OCI-LY7 (cell line): ENCODE measurements at regions of chr6 and their contacts with region 1.

Region 1: GRCh38 chr6:13277836-13278563 is 50.3 kb downstream of the TBC1D7 start:
- DNase-seq: peak; percentile 70
- H3K4me3 ChIP-seq: no peak overlapping the region
- H3K27ac ChIP-seq: no peak overlapping the region
- H3K4me1 ChIP-seq: peaks cover 42% of the 10 kb centered on the region
- CTCF ChIP-seq: peak; percentile 86

Region 2: GRCh38 chr6:11744753-11745152 is 1533.2 kb before region 1 on chr6:
- CTCF ChIA-PET with region 1: no interaction called
- POLR2A ChIA-PET with region 1: no interaction called
- intact Hi-C with region 1: no loop called
- DNase-seq: no peak
- H3K4me3 ChIP-seq: no peak overlapping the region
- H3K27ac ChIP-seq: no peak overlapping the region
- H3K4me1 ChIP-seq: no peaks in the 10 kb centered on the region
- CTCF ChIP-seq: no peak

Region 3: GRCh38 chr6:13194852-13195251 is 83.1 kb before region 1 on chr6:
- CTCF ChIA-PET with region 1: interaction called, 3 read pairs
- POLR2A ChIA-PET with region 1: no interaction called
- intact Hi-C with region 1: loop called (anchors 1 kb)
- DNase-seq: peak; percentile 79
- H3K4me3 ChIP-seq: no peak overlapping the region
- H3K27ac ChIP-seq: no peak overlapping the region
- H3K4me1 ChIP-seq: no peaks in the 10 kb centered on the region
- CTCF ChIP-seq: peak; percentile 88

Region 4: GRCh38 chr6:13229205-13230085 is 48.6 kb before region 1 on chr6:
- CTCF ChIA-PET with region 1: no interaction called
- POLR2A ChIA-PET with region 1: interaction called, 4 read pairs
- intact Hi-C with region 1: loop called (anchors 1 kb)
- DNase-seq: peak; percentile 63
- H3K4me3 ChIP-seq: peak overlapping the region; percentile 2
- H3K27ac ChIP-seq: no peak overlapping the region
- H3K4me1 ChIP-seq: peaks cover 10% of the 10 kb centered on the region
- CTCF ChIP-seq: peak; percentile 75

Region 5: GRCh38 chr6:13296536-13296997 is 18.6 kb after region 1 on chr6:
- CTCF ChIA-PET with region 1: interaction called, 3 read pairs
- POLR2A ChIA-PET with region 1: interaction called, 11 read pairs
- intact Hi-C with region 1: loop called (anchors 1 kb)
- DNase-seq: peak; percentile 92
- H3K4me3 ChIP-seq: peak overlapping the region; percentile 33
- H3K27ac ChIP-seq: peak overlapping the region; percentile 71
- H3K4me1 ChIP-seq: peaks cover 69% of the 10 kb centered on the region
- CTCF ChIP-seq: peak; percentile 58